Activated T-helper 1 cell treated with anti-CD3 and anti-CD28 coated beads, Interleukin-12 subunit alpha, Interleukin-12 subunit beta, Interleukin-2, Interleukin-4 antibody, amounts not matched to agents 30 ng/mL and 10 ng/mL and 1 ng/mL, durations not matched to agents 14 hours and 24 hours and 36 hours (primary cell): ENCODE measurements at regions of chr7 and their contacts with region 1.

Region 1: DNA sequence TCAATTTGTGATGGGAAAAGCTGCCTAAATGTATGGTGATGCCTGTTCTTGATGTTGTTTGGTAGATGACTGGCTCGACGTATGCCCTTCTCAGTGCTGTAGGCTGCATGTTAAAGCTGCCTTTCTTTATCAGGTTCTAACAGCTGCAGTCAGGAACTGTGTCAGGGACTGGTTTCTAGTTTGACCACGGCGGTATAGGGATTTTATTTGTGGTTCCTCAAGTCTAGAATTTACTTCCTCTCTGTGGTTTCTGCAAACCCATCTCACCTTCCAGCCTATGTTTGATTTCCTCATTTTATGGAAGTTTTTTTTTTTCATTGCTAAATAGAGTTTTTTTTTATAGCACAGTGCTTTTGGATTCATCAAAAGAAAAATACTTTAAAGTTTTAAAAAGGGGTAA is 26.5 kb downstream of the LMTK2 start:
- DNase-seq: peak; percentile 13
- H3K4me3 Mint-ChIP-seq: peak overlapping the region; percentile 61
- H3K27ac Mint-ChIP-seq: peak overlapping the region; percentile 37
- H3K4me1 Mint-ChIP-seq: peaks cover 39% of the 10 kb centered on the region
- H3K27me3 Mint-ChIP-seq: peaks cover 2% of the 10 kb centered on the region

Region 2: DNA sequence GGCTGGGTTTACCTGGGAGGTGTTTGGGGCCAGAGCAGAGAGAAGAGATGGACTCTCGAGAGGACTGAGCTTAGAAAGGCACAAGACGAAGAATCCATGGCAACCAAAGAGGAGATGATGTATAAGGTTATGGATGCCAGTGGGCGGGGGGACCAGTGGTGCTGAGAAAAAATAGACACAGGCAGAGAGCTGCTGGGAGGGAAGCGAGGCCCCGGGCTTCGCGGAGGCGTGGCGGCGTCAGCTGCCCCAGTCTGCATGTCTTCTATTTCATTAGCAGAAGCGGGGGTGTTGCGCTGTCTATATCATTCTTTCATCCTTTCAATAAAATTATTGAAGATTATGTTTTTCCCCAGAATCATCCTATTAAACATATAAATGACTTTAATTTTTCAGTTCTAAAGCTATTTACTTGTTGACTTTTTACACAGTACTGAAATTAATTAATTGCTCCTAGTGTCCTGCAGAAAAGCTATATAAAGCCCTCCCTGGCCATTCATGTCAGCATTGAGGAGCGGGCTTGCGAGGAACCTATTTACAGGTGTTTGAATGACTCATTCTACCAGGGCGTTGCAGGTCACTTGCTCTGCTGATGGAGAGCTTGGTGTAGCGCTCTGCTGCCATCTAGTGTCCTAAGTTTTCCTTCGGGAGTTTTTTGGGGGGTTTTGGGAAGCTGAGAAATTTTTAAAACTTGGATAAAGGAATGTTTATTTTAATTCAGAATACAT is 35.2 kb after region 1 on chr7:
- intact Hi-C with region 1: loop called (anchors 1 kb)
- DNase-seq: peak; percentile 49
- H3K4me3 Mint-ChIP-seq: no peak overlapping the region
- H3K27ac Mint-ChIP-seq: no peak overlapping the region
- H3K4me1 Mint-ChIP-seq: no peaks in the 10 kb centered on the region
- H3K27me3 Mint-ChIP-seq: no peaks in the 10 kb centered on the region

Region 3: GRCh38 chr7:98202367-98203195 is 69.4 kb after region 1 on chr7:
- intact Hi-C with region 1: loop called (anchors 2 kb)
- DNase-seq: peak; percentile 61
- H3K4me3 Mint-ChIP-seq: peak overlapping the region; percentile 56
- H3K27ac Mint-ChIP-seq: peak overlapping the region; percentile 32
- H3K4me1 Mint-ChIP-seq: peaks cover 38% of the 10 kb centered on the region
- H3K27me3 Mint-ChIP-seq: no peaks in the 10 kb centered on the region

Region 4: DNA sequence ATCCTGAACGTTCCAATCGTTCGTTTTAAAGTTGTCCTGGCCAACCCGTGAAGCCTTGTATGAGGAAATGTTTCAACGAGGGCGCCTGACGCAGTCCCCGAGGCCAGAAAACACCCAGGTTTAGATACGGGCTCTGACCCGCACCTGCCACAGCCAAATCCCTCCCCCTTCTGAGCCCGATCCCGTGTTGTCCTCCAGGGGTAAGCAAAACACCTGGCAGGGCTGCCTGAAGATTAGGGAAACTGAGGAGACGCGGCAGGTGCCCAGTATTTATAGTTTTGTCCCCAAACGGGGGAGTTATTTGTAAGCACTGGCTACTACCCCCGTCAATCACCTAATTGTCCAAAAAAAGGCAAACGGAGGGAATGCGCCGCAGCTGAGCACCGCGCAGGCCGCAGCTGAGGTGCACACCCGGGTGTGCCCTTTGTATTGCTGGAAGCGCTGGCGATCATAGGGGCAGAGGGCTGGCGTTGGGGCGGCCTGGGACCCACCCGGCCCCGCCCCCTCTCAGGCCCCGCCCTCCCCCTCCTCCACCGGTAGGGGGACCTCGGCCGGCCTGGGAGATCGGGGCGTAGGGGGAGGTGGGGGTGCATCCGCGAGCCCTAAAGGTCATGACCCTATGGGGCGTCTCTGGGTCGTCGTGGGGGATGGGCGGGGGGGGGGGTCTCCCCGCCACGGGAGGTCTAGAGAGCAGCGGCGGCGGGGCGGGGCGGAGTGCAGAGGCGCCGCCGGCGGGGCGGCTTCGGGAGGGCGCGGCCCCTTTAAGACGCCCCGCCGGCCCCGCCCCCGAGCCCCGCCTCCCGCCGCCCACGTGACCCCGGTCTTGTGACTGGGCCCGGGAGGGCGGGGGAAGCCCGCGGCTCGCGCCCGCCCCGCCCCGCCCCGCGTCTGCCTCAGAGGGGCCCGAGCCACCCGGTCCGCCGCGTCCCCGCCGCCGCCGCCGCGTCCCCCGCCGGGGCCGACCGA is 147.9 kb after region 1 on chr7 and contains the start of gene BRI3:
- intact Hi-C with region 1: no loop called
- DNase-seq: peak; percentile 75
- H3K4me3 Mint-ChIP-seq: peak within 1 kb of the TSS; percentile 88
- H3K27ac Mint-ChIP-seq: peak within 1 kb of the TSS; percentile 83
- H3K4me1 Mint-ChIP-seq: peaks cover 16% of the 10 kb centered on the region
- H3K27me3 Mint-ChIP-seq: no peaks in the 10 kb centered on the region
- total RNA-seq, gene BRI3: 67.1 and 68.3 TPM in 2 replicates